Esophagus muscularis mucosa (tissue), 4 donors: ENCODE measurements at regions of chr9 and their contacts with region 1.

Region 1: GRCh38 chr9:17900606-17901005 is 321.7 kb downstream of the SH3GL2 start:
- DNase-seq: no peak
- H3K4me3 ChIP-seq: no peak overlapping the region
- H3K27ac ChIP-seq: no peak overlapping the region
- H3K4me1 ChIP-seq: peaks cover 0 to 16% (median 11%) of the 10 kb centered on the region in 4 donors
- H3K27me3 ChIP-seq: peaks cover 0 to 1% (median 0%) of the 10 kb centered on the region in 4 donors
- CTCF ChIP-seq: no peak
- EP300 ChIP-seq: no peak
- POLR2A ChIP-seq: no peak

Region 2: DNA sequence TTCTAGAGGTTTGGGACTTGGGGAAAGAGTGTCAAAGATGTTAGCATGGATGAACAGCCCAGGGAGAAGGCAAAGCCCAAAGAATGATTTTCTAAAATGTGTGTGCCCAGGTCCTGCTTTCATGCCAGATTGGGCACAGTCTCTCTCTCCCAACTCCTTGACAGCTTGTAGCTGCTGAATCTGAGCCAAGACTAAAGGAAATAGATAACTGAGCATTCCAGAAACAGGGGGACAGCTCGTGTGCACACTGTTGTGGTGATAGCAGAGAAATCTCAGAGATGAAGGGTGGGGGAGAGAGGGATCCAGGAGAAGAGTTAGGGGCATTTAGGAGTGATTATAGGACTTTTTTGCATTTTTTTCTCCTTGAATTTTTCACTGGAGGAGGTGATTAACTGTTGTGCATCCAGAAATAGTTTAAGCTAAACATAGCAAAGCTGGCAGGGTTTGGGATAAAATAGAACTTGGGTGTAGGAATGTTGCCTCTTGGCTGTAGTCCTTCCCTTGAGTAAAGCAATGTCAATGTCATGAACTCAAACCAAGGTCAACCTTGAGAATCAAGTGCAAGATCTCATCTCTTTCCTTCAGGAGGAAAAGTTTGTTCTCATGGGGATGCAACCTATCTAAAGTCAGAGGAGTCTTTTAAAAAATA is 75.9 kb before region 1 on chr9:
- intact Hi-C with region 1: loop called (anchors 5 kb)
- DNase-seq: no peak
- H3K4me3 ChIP-seq: peak overlapping the region in 1 of 4 donors; percentile 13
- H3K27ac ChIP-seq: peak overlapping the region; percentile 35 to 68 (median 54)
- H3K4me1 ChIP-seq: peaks cover 14 to 25% (median 17%) of the 10 kb centered on the region in 4 donors
- H3K27me3 ChIP-seq: no peaks in the 10 kb centered on the region
- CTCF ChIP-seq: no peak
- EP300 ChIP-seq: no peak
- POLR2A ChIP-seq: no peak

Region 3: DNA sequence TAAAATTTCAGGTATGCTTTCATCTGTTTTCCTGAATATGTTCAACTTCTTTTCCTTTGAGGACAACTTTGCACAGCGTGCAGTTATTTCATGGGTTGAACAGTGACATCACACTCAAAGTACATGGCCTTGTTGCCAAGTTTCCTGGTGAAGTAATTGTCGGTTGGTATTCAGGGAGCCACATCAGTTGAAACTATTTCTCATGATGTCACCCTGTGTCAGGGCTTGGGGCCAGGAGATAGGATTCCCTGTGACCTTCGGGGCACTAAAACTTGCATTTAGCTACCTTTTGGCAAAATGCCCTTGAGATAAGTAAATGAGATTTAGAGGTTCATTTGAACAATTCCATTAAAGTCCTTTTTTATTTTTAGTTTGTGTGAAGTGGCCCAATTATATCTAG is 62.1 kb after region 1 on chr9:
- intact Hi-C with region 1: no loop called
- DNase-seq: no peak
- H3K4me3 ChIP-seq: no peak overlapping the region
- H3K27ac ChIP-seq: peak overlapping the region; percentile 63 to 78 (median 66)
- H3K4me1 ChIP-seq: peaks cover 0 to 73% (median 35%) of the 10 kb centered on the region in 4 donors
- H3K27me3 ChIP-seq: no peaks in the 10 kb centered on the region
- CTCF ChIP-seq: no peak
- EP300 ChIP-seq: no peak
- POLR2A ChIP-seq: no peak